Endothelial cell of umbilical vein (primary cell): ENCODE measurements at regions of chr1 and their contacts with region 1.

Region 1: GRCh38 chr1:180881806-180882509 is 30.7 kb upstream of the KIAA1614 start:
- DNase-seq: peak; percentile 53
- H3K4me3 ChIP-seq: no peak overlapping the region
- H3K27ac ChIP-seq: no peak overlapping the region
- H3K4me1 ChIP-seq: no peaks in the 10 kb centered on the region
- H3K27me3 ChIP-seq: no peaks in the 10 kb centered on the region
- CTCF ChIP-seq: peak; percentile 21 to 38
- POLR2A ChIP-seq: no peak

Region 2: GRCh38 chr1:180486092-180486491 is 395.9 kb before region 1 on chr1:
- CTCF ChIA-PET with region 1: no interaction called
- POLR2A ChIA-PET with region 1: no interaction called
- dilution Hi-C with region 1: no loop called
- intact Hi-C with region 1: no loop called
- DNase-seq: no peak
- H3K4me3 ChIP-seq: no peak overlapping the region
- H3K27ac ChIP-seq: no peak overlapping the region
- H3K4me1 ChIP-seq: peaks cover 5% of the 10 kb centered on the region
- H3K27me3 ChIP-seq: no peaks in the 10 kb centered on the region
- CTCF ChIP-seq: no peak
- POLR2A ChIP-seq: no peak

Region 3: GRCh38 chr1:180837020-180837419 is 44.9 kb before region 1 on chr1:
- CTCF ChIA-PET with region 1: no interaction called
- POLR2A ChIA-PET with region 1: no interaction called
- dilution Hi-C with region 1: no loop called
- intact Hi-C with region 1: no loop called
- DNase-seq: no peak
- H3K4me3 ChIP-seq: no peak overlapping the region
- H3K27ac ChIP-seq: no peak overlapping the region
- H3K4me1 ChIP-seq: no peaks in the 10 kb centered on the region
- H3K27me3 ChIP-seq: no peaks in the 10 kb centered on the region
- CTCF ChIP-seq: no peak
- POLR2A ChIP-seq: no peak

Region 4: DNA sequence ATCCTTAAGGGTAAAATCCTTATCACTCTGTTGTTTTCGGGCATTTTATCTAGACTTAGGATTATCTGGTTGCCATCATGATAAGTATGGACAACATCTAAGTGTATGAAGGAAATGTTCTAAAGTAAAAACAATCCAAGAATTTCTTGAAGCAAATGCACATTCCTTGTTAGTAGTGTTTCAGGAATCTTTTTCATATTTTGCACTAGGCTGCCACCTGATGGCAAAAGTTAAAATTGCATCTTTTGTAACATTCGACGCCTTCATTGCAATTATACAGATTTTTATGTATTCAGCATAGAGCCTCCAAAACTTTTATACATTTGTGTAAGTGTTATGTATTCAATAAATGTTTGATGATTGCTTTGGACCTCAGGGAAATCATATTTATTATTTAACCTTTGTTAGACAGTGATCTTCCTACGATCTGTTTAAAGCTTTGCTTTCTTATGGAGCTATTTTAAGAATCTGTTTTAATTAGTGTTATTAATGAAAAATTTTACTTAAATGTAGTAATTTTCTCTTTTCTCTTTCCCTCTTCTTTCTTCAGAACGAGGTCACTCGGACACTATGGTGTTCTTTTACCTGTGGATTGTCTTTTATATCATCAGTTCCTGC is 18.7 kb before region 1 on chr1:
- CTCF ChIA-PET with region 1: interaction called, 19 read pairs
- POLR2A ChIA-PET with region 1: no interaction called
- dilution Hi-C with region 1: no loop called
- intact Hi-C with region 1: no loop called
- DNase-seq: peak; percentile 80
- H3K4me3 ChIP-seq: no peak overlapping the region
- H3K27ac ChIP-seq: no peak overlapping the region
- H3K4me1 ChIP-seq: peaks cover 3% of the 10 kb centered on the region
- H3K27me3 ChIP-seq: no peaks in the 10 kb centered on the region
- CTCF ChIP-seq: peak; percentile 42 to 45
- POLR2A ChIP-seq: no peak

Region 5: DNA sequence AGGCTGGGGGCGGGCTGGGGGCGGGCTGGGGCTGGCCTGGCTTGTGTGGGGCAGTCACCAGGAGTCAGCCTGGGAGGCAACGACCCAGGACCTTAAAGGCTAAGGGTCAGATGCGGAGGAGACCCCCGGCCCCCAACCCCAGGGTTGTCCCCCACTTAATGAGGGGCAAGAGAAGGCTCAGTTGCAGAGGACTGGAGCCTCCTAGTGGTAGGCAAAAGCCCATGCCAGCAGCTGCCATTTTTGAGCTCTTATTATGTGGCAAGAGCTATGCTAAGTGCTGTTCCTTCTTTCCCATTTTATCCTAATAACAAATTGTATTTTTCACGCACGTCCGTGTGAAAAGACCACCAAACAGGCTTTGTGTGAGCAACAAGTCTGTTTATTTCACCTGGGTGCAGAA is 38.7 kb after region 1 on chr1:
- CTCF ChIA-PET with region 1: interaction called, 26 read pairs
- POLR2A ChIA-PET with region 1: no interaction called
- dilution Hi-C with region 1: no loop called
- intact Hi-C with region 1: no loop called
- DNase-seq: no peak
- H3K4me3 ChIP-seq: no peak overlapping the region
- H3K27ac ChIP-seq: no peak overlapping the region
- H3K4me1 ChIP-seq: no peaks in the 10 kb centered on the region
- H3K27me3 ChIP-seq: no peaks in the 10 kb centered on the region
- CTCF ChIP-seq: peak in 1 of 2 donors; percentile 24
- POLR2A ChIP-seq: no peak

Region 6: DNA sequence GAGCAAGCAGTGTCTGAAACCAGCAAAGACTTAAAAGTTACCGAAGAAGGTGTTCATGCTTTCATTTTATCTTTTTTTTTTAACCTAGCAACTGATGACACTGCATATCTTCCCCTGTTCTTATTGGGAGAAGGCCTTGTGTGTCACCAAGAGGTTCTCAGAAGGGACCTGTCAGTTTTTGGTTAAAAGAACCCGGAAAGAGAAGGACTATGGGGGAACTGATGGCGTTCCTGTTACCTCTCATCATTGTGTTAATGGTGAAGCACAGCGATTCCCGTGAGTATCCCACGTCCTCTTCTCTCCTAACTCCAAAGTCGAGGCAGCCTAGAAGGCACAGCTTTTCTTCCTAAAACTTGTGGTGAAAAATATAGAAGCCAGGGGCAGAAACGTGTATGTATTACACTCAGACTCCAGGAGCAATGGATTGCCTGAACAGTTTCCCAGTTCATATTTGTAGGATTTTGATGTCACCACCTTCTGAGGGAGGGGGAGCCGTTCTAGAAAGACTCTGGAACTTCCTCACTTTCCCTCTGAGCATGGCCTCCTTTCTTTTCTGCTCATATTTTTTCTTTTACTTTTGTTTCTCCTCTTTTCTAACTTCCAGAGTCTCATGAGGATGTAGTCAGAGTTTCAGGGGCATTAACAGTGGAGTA is 152.0 kb after region 1 on chr1 and contains the start of gene MR1:
- CTCF ChIA-PET with region 1: interaction called, 17 read pairs
- POLR2A ChIA-PET with region 1: no interaction called
- dilution Hi-C with region 1: no loop called
- intact Hi-C with region 1: loop called (anchors 5 kb)
- DNase-seq: peak; percentile 91
- H3K4me3 ChIP-seq: peak within 1 kb of the TSS in 2 of 3 experiments; percentile 1 to 43
- H3K27ac ChIP-seq: peak within 1 kb of the TSS; percentile 18
- H3K4me1 ChIP-seq: peaks cover 10% of the 10 kb centered on the region
- H3K27me3 ChIP-seq: no peaks in the 10 kb centered on the region
- CTCF ChIP-seq: no peak
- POLR2A ChIP-seq: no peak
- total RNA-seq, gene MR1: 1.1 and 1.3 TPM in 2 replicates

Region 7: DNA sequence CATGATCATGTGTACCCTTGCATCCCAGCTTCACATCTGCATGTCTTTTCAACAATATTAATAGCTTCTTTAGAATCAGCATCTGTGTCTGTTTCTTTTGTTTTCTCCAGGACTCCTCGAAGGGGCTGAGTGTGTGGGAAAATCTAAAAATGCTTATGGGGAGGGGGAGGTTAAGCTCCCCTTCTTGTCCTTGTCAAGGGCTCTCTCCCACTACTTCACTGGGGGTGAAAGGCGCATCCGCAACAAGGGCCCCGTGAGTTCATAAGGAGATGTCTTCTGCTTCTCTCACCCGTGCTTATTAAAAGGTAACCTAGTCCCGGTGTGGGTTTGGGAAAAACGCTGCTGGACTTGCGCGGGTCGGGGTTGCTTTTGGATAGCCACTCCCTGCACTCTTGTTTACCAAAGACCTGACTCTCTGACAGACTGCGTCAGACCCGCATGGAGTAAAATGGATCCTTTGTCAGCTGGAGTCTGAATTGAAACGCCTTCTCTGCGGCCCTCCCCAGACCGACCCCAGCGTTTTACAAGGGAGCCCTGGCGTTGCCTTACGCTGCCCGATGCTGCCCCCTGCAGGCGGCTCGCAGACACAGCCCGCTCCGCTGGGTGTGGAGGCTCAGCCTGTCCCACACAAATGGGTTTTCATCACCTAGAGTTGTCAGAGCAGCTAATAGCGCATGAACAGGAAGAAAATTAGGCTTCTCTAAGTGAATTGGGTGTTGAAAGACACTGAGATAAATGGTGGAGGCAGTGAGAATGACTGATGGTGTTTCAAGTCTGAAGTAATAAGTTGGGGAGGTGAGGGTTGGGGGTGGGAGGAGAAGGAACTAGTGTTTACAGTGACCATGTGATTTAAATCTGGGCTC is 260.4 kb after region 1 on chr1:
- CTCF ChIA-PET with region 1: interaction called, 125 read pairs
- POLR2A ChIA-PET with region 1: no interaction called
- dilution Hi-C with region 1: no loop called
- intact Hi-C with region 1: loop called (anchors 1 kb)
- DNase-seq: peak; percentile 85
- H3K4me3 ChIP-seq: peak overlapping the region in 1 of 3 experiments; percentile 4
- H3K27ac ChIP-seq: peak overlapping the region; percentile 20
- H3K4me1 ChIP-seq: peaks cover 23% of the 10 kb centered on the region
- H3K27me3 ChIP-seq: peaks cover 0 to 9% of the 10 kb centered on the region in 2 experiments
- CTCF ChIP-seq: peak; percentile 94 to 96
- POLR2A ChIP-seq: no peak

Region 8: GRCh38 chr1:181166377-181167196 is 284.6 kb after region 1 on chr1:
- CTCF ChIA-PET with region 1: interaction called, 123 read pairs
- POLR2A ChIA-PET with region 1: no interaction called
- dilution Hi-C with region 1: no loop called
- intact Hi-C with region 1: loop called (anchors 1 kb)
- DNase-seq: peak; percentile 74
- H3K4me3 ChIP-seq: no peak overlapping the region
- H3K27ac ChIP-seq: no peak overlapping the region
- H3K4me1 ChIP-seq: no peaks in the 10 kb centered on the region
- H3K27me3 ChIP-seq: peaks cover 2 to 10% of the 10 kb centered on the region in 2 experiments
- CTCF ChIP-seq: peak; percentile 71 to 82
- POLR2A ChIP-seq: no peak